ENCODE measurements at regions of chr11 and their contacts with region 1.

Region 1: GRCh38 chr11:82900277-82901164 is at the start of gene PRCP:
- DNase-seq: peak; percentile 97
- H3K4me3 ChIP-seq: peak within 1 kb of the TSS; percentile 4 to 72 (median 66)
- H3K27ac ChIP-seq: peak within 1 kb of the TSS; percentile 94 to 96 (median 96)
- H3K4me1 ChIP-seq: peaks cover 7 to 39% (median 24%) of the 10 kb centered on the region in 4 donors
- H3K27me3 ChIP-seq: no peaks in the 10 kb centered on the region
- CTCF ChIP-seq: no peak
- EP300 ChIP-seq: no peak
- POLR2A ChIP-seq: peak; percentile 85
- total RNA-seq, gene PRCP: 20.9 to 34.8 (median 29.9) TPM

Region 2: DNA sequence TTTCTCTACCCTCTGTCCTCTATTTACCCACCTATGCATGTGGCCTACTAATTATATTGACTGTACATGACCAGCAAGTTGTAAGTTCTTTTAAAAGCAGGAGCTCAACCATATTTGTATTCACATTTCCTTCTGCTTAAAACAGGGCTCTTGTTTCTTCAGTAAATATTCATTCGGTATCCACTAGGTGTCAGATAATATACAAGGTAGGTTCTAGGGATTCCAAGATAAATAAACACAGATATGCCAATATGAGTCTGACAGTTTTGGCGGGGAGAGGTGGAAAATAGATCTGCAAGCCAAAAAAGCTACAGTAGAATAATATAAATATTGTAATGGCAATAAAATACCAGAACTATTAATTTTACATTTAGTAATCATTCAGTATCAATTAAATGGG is 186.5 kb after region 1 on chr11:
- in situ Hi-C with region 1: loop called in 1 of 4 experiments (anchors 25 kb)
- intact Hi-C with region 1: no loop called
- DNase-seq: no peak
- H3K4me3 ChIP-seq: no peak overlapping the region
- H3K27ac ChIP-seq: no peak overlapping the region
- H3K4me1 ChIP-seq: peaks cover 0 to 15% (median 3%) of the 10 kb centered on the region in 4 donors
- H3K27me3 ChIP-seq: no peaks in the 10 kb centered on the region
- CTCF ChIP-seq: peak in 4 of 5 experiments; percentile 21 to 52 (median 41)
- EP300 ChIP-seq: no peak
- POLR2A ChIP-seq: no peak

Region 3: GRCh38 chr11:83193315-83194280 is 293.1 kb after region 1 on chr11 and contains the start of gene ANKRD42:
- in situ Hi-C with region 1: loop called in 2 of 4 experiments (anchors 10 kb)
- intact Hi-C with region 1: no loop called
- DNase-seq: peak; percentile 93
- H3K4me3 ChIP-seq: peak within 1 kb of the TSS; percentile 36 to 86 (median 64)
- H3K27ac ChIP-seq: peak within 1 kb of the TSS; percentile 91 to 97 (median 93)
- H3K4me1 ChIP-seq: peaks cover 9 to 41% (median 22%) of the 10 kb centered on the region in 4 donors
- H3K27me3 ChIP-seq: no peaks in the 10 kb centered on the region
- CTCF ChIP-seq: peak in 1 of 5 experiments; percentile 31
- EP300 ChIP-seq: no peak
- POLR2A ChIP-seq: peak; percentile 82
- total RNA-seq, gene ANKRD42: 5.6 to 11.5 (median 8.9) TPM

Region 4: DNA sequence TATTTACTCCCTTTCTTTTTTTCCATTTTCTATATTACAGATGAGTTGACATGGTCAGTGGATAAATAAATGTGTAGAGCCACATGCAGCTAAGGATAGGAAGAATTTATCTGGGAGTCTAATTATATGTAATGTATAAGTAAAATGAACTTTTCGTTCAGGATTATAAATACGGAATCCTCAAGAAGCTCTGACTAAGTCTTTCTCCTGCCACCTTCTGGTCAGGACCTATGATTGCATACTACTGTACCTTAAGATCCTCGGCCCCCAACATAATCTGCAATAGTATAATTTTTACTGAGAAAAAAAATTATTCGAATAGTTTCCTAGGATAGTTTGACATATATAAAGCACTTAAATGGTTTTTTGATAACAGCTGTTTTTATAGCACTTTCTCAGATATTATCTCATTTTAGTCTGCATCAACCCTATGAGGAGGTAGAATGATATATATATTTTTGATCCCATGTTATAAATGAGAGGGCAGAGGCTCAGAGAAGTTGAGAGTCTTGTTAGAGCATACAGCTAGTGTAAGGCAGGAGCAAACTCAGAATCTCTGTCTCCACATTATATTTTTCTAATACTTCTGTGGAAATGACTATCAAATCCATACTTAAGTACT is 349.6 kb after region 1 on chr11:
- in situ Hi-C with region 1: loop called in 3 of 4 experiments (anchors 5 to 10 kb)
- intact Hi-C with region 1: loop called (anchors 10 kb)
- DNase-seq: no peak
- H3K4me3 ChIP-seq: no peak overlapping the region
- H3K27ac ChIP-seq: no peak overlapping the region
- H3K4me1 ChIP-seq: no peaks in the 10 kb centered on the region
- H3K27me3 ChIP-seq: no peaks in the 10 kb centered on the region
- CTCF ChIP-seq: peak; percentile 56 to 74 (median 69)
- EP300 ChIP-seq: no peak
- POLR2A ChIP-seq: no peak

Region 5: DNA sequence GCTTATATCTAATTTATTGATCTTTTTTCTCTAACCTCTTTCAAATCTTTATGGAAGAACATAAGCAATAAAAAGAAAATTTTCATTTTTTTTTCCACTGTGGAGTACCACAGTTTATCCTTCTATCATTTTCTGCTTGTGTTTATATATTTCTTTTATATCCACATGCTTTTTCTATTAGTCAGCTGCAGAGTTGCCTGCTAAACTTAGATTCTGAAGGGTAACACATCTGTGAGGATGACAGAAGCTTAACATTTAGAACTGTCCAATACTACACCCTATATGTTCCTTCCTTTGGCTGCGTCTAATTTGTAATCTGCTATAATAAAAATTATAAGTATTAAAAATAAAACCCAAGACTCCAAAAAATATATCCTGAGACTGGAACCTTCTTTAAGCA is 364.8 kb after region 1 on chr11:
- in situ Hi-C with region 1: no loop called
- intact Hi-C with region 1: no loop called
- DNase-seq: no peak
- H3K4me3 ChIP-seq: no peak overlapping the region
- H3K27ac ChIP-seq: no peak overlapping the region
- H3K4me1 ChIP-seq: no peaks in the 10 kb centered on the region
- H3K27me3 ChIP-seq: no peaks in the 10 kb centered on the region
- CTCF ChIP-seq: no peak
- EP300 ChIP-seq: no peak
- POLR2A ChIP-seq: no peak